Ascending aorta (tissue), 2 donors: ENCODE measurements at regions of chr2 and their contacts with region 1.

Region 1: GRCh38 chr2:231905026-231905425 is 21.2 kb downstream of the NPPC start:
- DNase-seq: no peak
- H3K4me3 ChIP-seq: no peak overlapping the region
- H3K27ac ChIP-seq: no peak overlapping the region
- H3K4me1 ChIP-seq: no peaks in the 10 kb centered on the region
- H3K27me3 ChIP-seq: no peaks in the 10 kb centered on the region
- CTCF ChIP-seq: no peak

Region 2: DNA sequence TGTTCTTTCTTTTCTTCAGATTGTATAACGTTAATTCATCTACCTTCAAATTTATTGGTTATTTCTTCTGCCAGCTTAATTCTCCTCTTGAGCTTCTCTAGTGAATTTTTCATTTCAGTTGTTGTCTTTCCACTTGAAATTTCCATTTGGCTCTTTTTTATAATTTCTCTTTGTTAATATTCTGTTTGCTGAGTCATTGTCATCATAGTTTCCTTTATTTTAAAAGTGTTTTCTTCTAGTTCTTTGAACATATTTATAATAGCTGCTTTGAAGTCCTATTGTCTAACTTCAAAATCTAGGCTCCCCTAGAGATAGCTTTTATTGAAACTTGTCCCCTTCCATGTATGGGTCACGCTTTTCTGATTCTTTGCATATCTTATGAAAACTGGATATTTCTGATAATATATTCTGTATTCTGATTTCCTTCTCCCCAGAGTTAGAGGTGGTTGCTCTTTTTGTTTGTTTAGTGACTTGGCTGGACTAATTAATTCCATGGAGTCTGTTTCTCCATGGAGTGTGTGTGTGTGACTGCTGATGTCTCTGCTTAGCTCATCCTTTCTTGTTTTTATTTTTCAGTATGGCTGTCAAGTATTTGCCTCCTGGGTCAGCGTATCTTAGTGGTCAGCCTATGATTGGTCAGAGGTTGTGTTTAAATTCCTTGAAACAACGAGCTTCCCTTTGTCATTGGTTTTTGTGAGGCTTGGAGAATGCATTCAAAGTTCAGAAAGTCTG is 104.0 kb after region 1 on chr2:
- intact Hi-C with region 1: no loop called
- DNase-seq: no peak
- H3K4me3 ChIP-seq: no peak overlapping the region
- H3K27ac ChIP-seq: no peak overlapping the region
- H3K4me1 ChIP-seq: no peaks in the 10 kb centered on the region
- H3K27me3 ChIP-seq: no peaks in the 10 kb centered on the region
- CTCF ChIP-seq: no peak

Region 3: DNA sequence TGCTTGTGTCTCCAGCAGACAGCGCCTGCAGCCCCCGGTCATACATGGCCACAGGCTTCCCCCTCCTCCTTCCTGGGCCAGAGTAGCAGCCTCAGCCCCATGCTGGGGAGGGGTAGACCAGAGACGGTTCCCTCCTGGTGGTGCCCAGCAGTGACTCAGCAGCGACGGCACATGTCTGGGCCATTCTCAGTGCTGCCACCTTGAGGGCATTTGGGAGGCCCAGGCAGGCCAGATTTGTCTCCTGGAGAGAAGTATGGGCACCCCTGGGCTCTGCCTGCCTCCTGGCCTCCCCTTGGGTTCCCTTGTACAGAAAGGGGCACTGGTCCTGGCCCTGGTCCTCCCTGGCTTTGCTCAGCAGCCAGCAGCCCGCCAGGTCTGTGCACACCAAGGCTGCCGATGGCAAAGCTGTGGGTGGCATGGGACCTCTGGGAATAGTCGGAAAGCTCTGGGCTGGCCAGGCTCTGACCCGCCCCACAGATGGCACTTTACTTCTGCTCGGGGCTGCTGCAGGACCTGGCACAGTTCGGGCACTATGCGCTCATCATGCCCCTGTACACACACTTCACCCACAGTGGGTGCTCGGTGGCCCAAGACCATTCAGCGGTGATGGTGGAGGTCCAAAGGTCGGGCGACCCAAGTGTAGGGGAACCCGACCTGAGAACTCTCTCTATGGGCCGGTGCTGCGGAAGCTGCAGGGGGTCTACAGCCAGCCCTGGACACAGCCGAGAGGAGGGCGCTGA is 539.6 kb after region 1 on chr2:
- intact Hi-C with region 1: loop called (anchors 5 kb)
- DNase-seq: peak in 1 of 2 donors; percentile 58
- H3K4me3 ChIP-seq: no peak overlapping the region
- H3K27ac ChIP-seq: no peak overlapping the region
- H3K4me1 ChIP-seq: no peaks in the 10 kb centered on the region
- H3K27me3 ChIP-seq: no peaks in the 10 kb centered on the region
- CTCF ChIP-seq: peak in 1 of 3 experiments; percentile 35